A549 (cell line): ENCODE measurements at regions of chr7 and their contacts with region 1.

Region 1: DNA sequence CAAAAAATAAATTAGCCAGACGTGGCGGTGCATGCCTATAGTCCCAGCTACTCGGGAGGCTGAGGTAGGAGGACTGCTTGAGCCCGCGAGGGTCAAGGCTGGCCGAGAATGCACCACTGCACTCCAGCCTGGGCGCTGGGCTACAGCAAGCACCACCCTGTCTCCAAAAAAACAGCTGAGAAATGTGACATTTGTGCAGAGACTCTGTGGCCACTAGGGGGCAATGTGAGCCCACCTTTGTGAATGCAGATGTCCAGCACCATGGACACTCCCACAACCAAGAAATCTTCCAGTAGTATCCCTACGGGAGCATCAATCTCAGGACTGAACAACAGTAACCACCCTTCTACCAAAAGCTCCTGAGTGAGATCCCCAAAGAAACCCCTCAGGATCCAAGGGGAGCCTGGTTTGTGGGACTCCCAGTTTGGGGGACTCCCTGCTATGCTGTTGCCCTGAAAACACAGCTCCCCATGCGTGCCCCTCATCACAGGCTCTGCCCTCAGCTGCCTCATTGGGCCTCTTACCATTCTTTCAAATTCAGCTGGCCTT is 6.2 kb upstream of the AHCYL2 start:
- DNase-seq: peak; percentile 81 to 93
- ATAC-seq: peak; percentile 95 to 96
- H3K4me3 ChIP-seq: no peak overlapping the region
- H3K27ac ChIP-seq: no peak overlapping the region
- H3K4me1 ChIP-seq: 0 out of 3 replicates have a peak, but pooled peaks cover 3% of the 10 kb centered on the region
- CTCF ChIP-seq: peak; percentile 94
- EP300 ChIP-seq: no peak
- POLR2A ChIP-seq: no peak
- RAD21 ChIP-seq: peak; percentile 96 to 98

Region 2: DNA sequence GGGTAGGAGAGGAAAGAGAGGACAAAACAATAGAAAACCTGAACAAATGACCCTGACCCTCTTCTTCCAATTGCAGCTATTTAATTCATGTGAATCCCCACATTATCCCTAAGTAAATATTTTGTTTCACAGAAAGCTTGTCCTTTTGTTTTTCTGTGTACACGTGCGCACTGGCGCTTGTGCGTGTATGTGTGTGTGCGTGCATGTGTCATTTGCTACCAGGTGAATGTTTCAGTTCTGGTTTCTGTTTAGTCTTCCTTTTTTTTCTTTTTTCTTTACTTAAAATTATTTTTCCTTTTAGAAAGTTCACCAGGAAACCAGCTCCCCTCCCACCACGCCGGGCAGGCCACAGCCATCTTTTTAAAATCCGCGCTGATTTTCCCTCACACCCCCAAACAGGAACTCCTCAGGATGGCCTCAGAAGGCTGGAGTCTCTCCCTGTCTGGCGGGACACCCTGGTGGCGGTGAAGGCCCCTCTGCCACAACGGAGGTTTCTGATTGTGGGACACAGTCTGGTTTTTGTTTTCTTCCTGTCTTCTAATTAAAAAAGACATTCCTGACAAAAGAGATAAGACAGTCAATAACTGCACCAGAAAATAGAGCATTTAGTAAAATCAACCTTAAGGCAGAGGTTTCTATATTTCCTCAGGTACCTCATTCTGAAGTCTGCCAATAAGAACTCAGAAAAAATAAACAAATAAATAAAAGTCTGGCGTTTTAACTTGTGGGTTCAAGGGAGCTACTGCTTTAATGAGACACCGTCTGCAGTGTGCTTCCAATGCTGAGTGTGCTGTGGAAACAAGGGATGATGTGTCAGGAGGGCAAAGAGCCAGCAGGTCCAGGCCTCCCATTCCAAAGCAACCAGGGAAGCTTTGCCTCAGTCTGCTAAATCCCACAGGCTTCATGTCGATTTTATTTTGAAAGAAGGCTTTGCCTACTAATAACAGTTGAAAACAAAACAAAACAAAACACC is 263.5 kb before region 1 on chr7:
- CTCF ChIA-PET with region 1: no interaction called
- POLR2A ChIA-PET with region 1: no interaction called
- DNase-seq: no peak
- ATAC-seq: no peak
- H3K4me3 ChIP-seq: no peak overlapping the region
- H3K27ac ChIP-seq: no peak overlapping the region
- H3K4me1 ChIP-seq: no peaks in the 10 kb centered on the region
- CTCF ChIP-seq: no peak
- EP300 ChIP-seq: no peak
- POLR2A ChIP-seq: no peak
- RAD21 ChIP-seq: no peak

Region 3: DNA sequence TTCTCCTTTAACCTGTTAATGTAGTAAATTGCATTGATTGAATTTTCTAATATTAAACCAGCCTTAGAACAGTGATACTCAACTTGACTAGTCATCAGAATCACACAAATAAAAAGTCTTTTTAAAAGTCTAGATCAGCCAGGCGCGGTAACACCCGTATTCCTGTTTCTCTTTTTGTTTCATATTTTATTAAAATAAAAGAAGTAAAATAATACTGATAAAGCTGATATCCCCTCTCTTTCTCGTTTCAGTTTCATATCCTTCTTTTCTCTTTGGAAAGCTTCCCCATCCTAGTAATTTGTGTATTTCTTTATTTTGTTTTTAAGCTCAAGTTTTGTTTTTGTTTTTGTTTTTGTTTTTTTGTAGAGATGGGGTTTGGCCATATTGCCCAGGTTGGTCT is 20.8 kb before region 1 on chr7:
- CTCF ChIA-PET with region 1: interaction called, 21 read pairs
- POLR2A ChIA-PET with region 1: no interaction called
- DNase-seq: no peak
- ATAC-seq: no peak
- H3K4me3 ChIP-seq: no peak overlapping the region
- H3K27ac ChIP-seq: no peak overlapping the region
- H3K4me1 ChIP-seq: no peaks in the 10 kb centered on the region
- CTCF ChIP-seq: no peak
- EP300 ChIP-seq: no peak
- POLR2A ChIP-seq: no peak
- RAD21 ChIP-seq: no peak

Region 4: GRCh38 chr7:129258649-129259389 is 40.2 kb after region 1 on chr7:
- CTCF ChIA-PET with region 1: interaction called, 19 read pairs
- POLR2A ChIA-PET with region 1: no interaction called
- DNase-seq: no peak
- ATAC-seq: no peak
- H3K4me3 ChIP-seq: no peak overlapping the region
- H3K27ac ChIP-seq: no peak overlapping the region
- H3K4me1 ChIP-seq: peaks cover 4% of the 10 kb centered on the region; the same call in 1 of the 3 replicates
- CTCF ChIP-seq: no peak
- EP300 ChIP-seq: no peak
- POLR2A ChIP-seq: no peak
- RAD21 ChIP-seq: no peak

Region 5: DNA sequence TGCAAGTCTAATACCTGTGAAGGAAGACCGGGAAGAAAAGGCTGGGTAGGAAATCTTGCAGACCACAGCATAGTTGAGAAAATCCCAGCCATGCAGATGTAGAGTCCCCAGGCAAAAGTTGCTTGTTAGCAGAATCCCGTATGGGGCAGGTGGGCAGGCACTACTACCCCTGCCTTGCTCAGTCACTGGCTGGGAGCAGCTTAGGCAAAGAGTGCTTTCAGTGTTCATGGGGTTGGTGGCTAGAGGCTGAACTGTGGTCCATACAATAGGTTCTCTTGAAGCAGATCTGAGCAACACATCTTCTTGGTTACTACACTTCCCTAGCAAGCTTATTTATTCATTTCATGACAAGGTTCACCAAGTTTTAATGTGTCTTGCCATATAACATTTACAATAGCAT is 98.9 kb after region 1 on chr7:
- CTCF ChIA-PET with region 1: interaction called, 10 read pairs
- POLR2A ChIA-PET with region 1: no interaction called
- DNase-seq: no peak
- ATAC-seq: no peak
- H3K4me3 ChIP-seq: no peak overlapping the region
- H3K27ac ChIP-seq: no peak overlapping the region
- H3K4me1 ChIP-seq: no peaks in the 10 kb centered on the region
- CTCF ChIP-seq: no peak
- EP300 ChIP-seq: no peak
- POLR2A ChIP-seq: no peak
- RAD21 ChIP-seq: no peak

Region 6: GRCh38 chr7:129367700-129368388 is 149.3 kb after region 1 on chr7:
- CTCF ChIA-PET with region 1: interaction called, 37 read pairs
- POLR2A ChIA-PET with region 1: interaction called, 3 read pairs
- DNase-seq: peak; percentile 69 to 76
- ATAC-seq: peak; percentile 96
- H3K4me3 ChIP-seq: no peak overlapping the region
- H3K27ac ChIP-seq: peak overlapping the region in 1 of 2 experiments; percentile 44; a peak in 3 of 6 replicates
- H3K4me1 ChIP-seq: 0 out of 3 replicates have a peak, but pooled peaks cover 6% of the 10 kb centered on the region
- CTCF ChIP-seq: peak; percentile 91
- EP300 ChIP-seq: peak in 1 of 2 experiments; percentile 54; a peak in 1 of 5 replicates
- POLR2A ChIP-seq: no peak
- RAD21 ChIP-seq: peak; percentile 84 to 86

Region 7: DNA sequence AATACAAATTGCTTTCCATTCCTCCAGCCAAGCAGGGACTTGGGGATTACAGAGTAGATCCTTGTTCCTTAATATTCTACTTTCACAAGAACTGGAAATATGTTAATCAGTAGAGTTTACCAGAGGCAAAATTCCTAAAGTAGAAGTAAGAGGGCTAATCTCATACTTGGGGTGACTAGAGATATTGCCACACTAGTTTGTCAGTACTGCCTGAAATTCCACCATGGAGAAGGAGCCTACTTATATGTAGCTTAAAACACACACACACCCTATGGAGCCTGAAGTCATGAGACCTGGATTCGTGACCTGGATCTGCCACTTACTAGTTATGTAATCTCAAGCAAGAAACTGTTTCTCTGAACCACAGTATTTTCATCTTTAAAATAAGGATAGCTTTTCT is 249.5 kb after region 1 on chr7:
- CTCF ChIA-PET with region 1: interaction called, 65 read pairs
- POLR2A ChIA-PET with region 1: interaction called, 3 read pairs
- DNase-seq: no peak
- ATAC-seq: no peak
- H3K4me3 ChIP-seq: no peak overlapping the region
- H3K27ac ChIP-seq: no peak overlapping the region
- H3K4me1 ChIP-seq: peaks cover 10% of the 10 kb centered on the region; the same call in 1 of the 3 replicates
- CTCF ChIP-seq: no peak
- EP300 ChIP-seq: no peak
- POLR2A ChIP-seq: no peak
- RAD21 ChIP-seq: no peak